ENCODE measurements at regions of chrX and their contacts with region 1.

Region 1: GRCh38 chrX:37685452-37686353 is at the start of gene XK:
- DNase-seq: peak; percentile 26
- H3K4me3 Mint-ChIP-seq: peak within 1 kb of the TSS; percentile 66
- H3K27ac Mint-ChIP-seq: no peak within 1 kb of the TSS
- H3K4me1 Mint-ChIP-seq: peaks cover 2% of the 10 kb centered on the region
- H3K27me3 Mint-ChIP-seq: peaks cover 2% of the 10 kb centered on the region
- total RNA-seq, gene XK: 0.32 and 0.34 TPM in 2 replicates

Region 2: DNA sequence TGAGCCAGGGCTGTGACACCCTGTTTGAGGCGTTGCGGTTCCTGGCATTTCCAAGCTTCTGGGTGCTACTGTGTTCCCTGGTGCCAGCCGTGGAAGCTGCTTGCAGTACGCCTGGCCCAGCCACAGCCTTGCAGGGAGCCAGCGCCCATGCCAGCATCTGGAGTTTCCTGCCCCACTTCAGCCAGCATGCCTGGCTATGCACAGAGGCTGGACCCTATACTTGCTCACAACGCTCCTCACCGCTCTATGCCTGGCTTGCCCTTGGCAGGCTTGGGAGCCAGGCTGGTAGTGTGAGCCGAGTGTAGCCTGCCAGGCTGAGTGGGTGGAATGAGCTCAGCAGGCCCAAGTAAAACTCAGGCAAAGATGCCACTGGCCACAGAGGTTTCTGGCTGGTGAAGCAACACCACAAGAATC is 314.1 kb before region 1 on chrX:
- intact Hi-C with region 1: no loop called
- DNase-seq: no peak
- H3K4me3 Mint-ChIP-seq: no peak overlapping the region
- H3K27ac Mint-ChIP-seq: no peak overlapping the region
- H3K4me1 Mint-ChIP-seq: no peaks in the 10 kb centered on the region
- H3K27me3 Mint-ChIP-seq: no peaks in the 10 kb centered on the region

Region 3: DNA sequence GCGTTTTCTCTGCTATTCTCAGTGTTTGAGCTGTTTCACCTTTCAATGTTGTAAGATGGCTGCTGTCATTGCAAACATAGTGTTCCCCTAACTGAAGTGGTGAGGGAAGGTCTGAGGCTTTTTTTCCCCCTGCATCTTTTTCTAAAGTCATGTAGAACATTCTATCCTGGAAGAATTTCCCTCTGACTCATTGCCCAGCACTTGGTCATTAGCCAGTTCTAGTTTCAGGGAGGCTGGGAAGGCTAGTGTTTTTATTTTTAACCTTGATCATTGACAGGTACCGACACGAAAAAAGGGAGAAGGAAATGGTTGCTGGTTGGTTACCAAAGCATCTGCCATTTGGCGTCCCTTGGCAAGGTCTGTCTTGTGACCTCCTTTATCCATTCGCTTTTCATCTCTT is 107.7 kb before region 1 on chrX:
- intact Hi-C with region 1: loop called (anchors 10 kb)
- DNase-seq: no peak
- H3K4me3 Mint-ChIP-seq: no peak overlapping the region
- H3K27ac Mint-ChIP-seq: no peak overlapping the region
- H3K4me1 Mint-ChIP-seq: peaks cover 3% of the 10 kb centered on the region
- H3K27me3 Mint-ChIP-seq: peaks cover 6% of the 10 kb centered on the region

Region 4: GRCh38 chrX:37854148-37854547 is 168.4 kb after region 1 on chrX:
- intact Hi-C with region 1: no loop called
- DNase-seq: no peak
- H3K4me3 Mint-ChIP-seq: no peak overlapping the region
- H3K27ac Mint-ChIP-seq: no peak overlapping the region
- H3K4me1 Mint-ChIP-seq: peaks cover 7% of the 10 kb centered on the region
- H3K27me3 Mint-ChIP-seq: peaks cover 5% of the 10 kb centered on the region

Region 5: GRCh38 chrX:38175140-38175539 is 489.4 kb after region 1 on chrX:
- intact Hi-C with region 1: no loop called
- DNase-seq: no peak
- H3K4me3 Mint-ChIP-seq: no peak overlapping the region
- H3K27ac Mint-ChIP-seq: no peak overlapping the region
- H3K4me1 Mint-ChIP-seq: no peaks in the 10 kb centered on the region
- H3K27me3 Mint-ChIP-seq: peaks cover under 1% of the 10 kb centered on the region

Measured in activated T-helper 2 cell treated with anti-CD3 and anti-CD28 coated beads, Interferon-gamma antibody, Interleukin-2, Interleukin-4, amounts not matched to agents 10 μg/mL and 5 μg/mL and 100 μg/mL, durations not matched to agents 14 hours and 24 hours and 36 hours (primary cell).